ENCODE measurements at regions of chr11 and their contacts with region 1.

Region 1: DNA sequence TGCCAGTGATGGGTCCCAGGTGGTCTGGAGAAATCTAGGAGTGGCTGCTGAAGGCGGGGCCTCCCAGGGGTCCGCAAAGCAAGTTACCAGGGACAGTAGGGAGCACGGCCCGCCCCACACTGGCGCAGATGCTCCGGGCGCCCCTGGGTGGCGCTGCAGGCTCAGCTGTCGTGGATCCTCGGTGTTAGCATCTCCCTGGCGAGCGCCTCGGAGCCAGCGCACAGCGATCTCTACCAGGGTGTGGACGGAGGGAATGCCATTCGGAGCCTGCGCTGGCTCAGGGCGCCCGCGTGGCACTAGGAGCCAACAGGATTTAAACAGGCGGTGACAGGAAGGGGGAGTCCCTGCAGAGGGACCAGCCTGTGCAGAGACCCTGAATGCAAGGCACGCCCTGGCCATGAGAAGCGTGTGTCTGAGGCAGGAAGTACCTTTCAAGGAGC is 20.2 kb downstream of the FADS3 start:
- DNase-seq: peak; percentile 65 to 89
- H3K4me3 ChIP-seq: no peak overlapping the region
- H3K27ac ChIP-seq: no peak overlapping the region
- H3K4me1 ChIP-seq: 0 out of 2 replicates have a peak, but pooled peaks cover 3% of the 10 kb centered on the region
- H3K27me3 ChIP-seq: no peaks in the 10 kb centered on the region
- CTCF ChIP-seq: peak; percentile 97

Region 2: DNA sequence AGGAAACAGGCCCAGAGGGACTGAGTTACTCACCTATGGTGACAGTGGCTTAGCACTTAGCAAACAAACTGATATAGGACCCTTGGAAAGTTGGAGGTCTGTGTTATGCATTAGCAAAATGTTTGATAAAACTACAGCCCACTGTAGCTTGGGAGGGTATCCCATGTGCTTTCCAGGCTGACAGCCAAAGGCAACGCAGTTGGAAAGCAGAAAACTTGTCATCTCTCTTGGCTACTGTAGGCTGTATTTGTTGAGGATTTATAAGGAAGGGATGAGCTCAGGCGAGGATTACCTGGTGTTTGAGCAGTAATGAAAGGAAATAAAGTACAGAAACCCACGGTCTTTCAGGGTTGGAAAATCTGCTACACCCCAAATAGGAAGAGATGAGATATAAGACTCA is 417.5 kb before region 1 on chr11:
- CTCF ChIA-PET with region 1: no interaction called
- POLR2A ChIA-PET with region 1: no interaction called
- intact Hi-C with region 1: no loop called
- DNase-seq: no peak
- H3K4me3 ChIP-seq: no peak overlapping the region
- H3K27ac ChIP-seq: no peak overlapping the region
- H3K4me1 ChIP-seq: no peaks in the 10 kb centered on the region
- H3K27me3 ChIP-seq: no peaks in the 10 kb centered on the region
- CTCF ChIP-seq: no peak

Region 3: DNA sequence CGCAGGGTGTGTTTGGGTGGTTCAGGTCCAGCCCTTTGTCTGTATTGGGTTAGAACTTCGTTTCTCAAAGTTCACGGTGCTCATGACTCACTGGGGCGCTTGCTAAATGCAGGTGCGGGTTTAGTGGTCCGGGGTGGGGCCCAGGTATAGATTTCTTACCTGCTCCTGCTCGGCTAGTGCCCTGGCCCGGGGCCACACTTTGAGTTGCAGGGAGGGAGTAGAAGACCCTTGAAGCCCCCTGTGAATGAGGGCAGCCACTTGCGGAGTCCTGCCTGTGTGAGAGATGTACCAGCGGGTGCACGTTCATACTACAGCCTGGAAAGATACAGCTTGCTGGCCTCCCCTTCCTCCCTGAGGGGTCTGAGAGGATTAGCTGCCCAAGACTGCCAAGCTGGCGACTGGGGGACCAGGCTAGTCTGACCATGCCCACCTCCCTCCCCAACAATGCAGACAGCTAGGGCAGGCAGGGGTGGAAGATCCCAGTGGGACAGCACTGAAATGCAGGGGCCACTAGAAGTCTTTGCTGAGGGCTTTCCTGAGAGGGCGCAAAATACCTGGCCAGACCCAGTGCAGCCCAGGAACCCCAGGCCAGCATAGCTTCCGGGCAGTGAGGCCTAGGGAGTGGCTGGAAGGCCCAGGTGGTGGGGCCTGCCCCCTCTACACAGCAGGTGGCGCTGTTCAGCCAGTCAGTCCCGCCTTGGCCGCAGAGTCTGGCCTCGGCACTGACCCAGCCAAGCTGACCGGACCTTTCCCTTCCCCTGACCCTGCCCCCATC is 123.8 kb before region 1 on chr11:
- CTCF ChIA-PET with region 1: no interaction called
- POLR2A ChIA-PET with region 1: no interaction called
- intact Hi-C with region 1: no loop called
- DNase-seq: peak; percentile 65 to 86
- H3K4me3 ChIP-seq: no peak overlapping the region
- H3K27ac ChIP-seq: no peak overlapping the region
- H3K4me1 ChIP-seq: peaks cover 18% of the 10 kb centered on the region
- H3K27me3 ChIP-seq: no peaks in the 10 kb centered on the region
- CTCF ChIP-seq: peak; percentile 98

Region 4: DNA sequence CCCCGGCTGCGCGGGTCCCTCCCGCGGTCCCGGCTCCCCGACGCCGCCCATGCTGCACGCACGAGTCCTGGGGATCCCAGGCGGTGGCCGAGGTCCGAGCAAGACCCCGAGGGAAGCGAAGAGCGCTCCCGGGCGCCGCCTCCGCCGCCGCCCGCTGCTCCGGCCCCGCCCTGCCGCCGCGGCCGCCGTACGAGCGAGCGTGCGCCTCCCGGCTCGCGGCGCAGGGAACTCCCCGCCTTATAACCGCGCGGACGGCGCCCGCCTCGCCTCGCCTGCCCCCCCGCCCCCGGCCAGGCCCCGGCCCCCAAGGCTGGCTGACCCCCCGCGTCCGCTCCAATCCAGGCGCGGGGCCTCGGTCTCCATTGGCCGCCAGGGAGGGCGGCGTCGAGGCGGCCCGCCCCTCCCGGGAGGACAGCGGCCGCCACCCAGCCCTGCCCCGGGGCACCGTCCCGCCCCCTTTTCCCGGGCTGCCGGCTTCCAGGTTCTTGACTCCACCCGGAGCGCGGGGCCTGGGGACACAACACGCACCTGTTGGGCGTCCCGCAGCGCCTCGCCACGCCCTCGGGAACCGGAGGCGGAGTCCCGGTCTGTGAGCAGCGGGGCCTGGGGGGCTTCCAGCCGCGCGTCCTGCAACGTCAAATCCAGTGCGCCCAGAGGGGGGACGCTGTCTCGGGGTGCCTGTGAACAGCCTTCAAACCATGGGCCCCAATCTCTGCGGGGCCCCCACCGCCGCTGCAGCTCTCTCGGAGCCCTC is 20.3 kb after region 1 on chr11 and contains the start of gene FADS3:
- CTCF ChIA-PET with region 1: no interaction called
- POLR2A ChIA-PET with region 1: no interaction called
- intact Hi-C with region 1: loop called (anchors 2 kb)
- DNase-seq: peak; percentile 75 to 96
- H3K4me3 ChIP-seq: peak within 1 kb of the TSS; percentile 94
- H3K27ac ChIP-seq: no peak within 1 kb of the TSS
- H3K4me1 ChIP-seq: peaks cover 12% of the 10 kb centered on the region
- H3K27me3 ChIP-seq: no peaks in the 10 kb centered on the region
- CTCF ChIP-seq: no peak
- total RNA-seq, gene FADS3: 74.0 and 75.5 TPM in 2 replicates

Region 5: GRCh38 chr11:61947486-61948210 is 76.5 kb after region 1 on chr11:
- CTCF ChIA-PET with region 1: interaction called, 5 read pairs
- POLR2A ChIA-PET with region 1: no interaction called
- intact Hi-C with region 1: loop called (anchors 2 kb)
- DNase-seq: peak; percentile 61 to 77
- H3K4me3 ChIP-seq: no peak overlapping the region
- H3K27ac ChIP-seq: no peak overlapping the region
- H3K4me1 ChIP-seq: peaks cover 23% of the 10 kb centered on the region
- H3K27me3 ChIP-seq: no peaks in the 10 kb centered on the region
- CTCF ChIP-seq: peak; percentile 95

Region 6: GRCh38 chr11:62054484-62055121 is 183.4 kb after region 1 on chr11:
- CTCF ChIA-PET with region 1: no interaction called
- POLR2A ChIA-PET with region 1: no interaction called
- intact Hi-C with region 1: loop called (anchors 1 kb)
- DNase-seq: peak; percentile 80 to 95
- H3K4me3 ChIP-seq: no peak overlapping the region; the same call in 1 of the 2 replicates
- H3K27ac ChIP-seq: peak overlapping the region; percentile 85
- H3K4me1 ChIP-seq: peaks cover 53% of the 10 kb centered on the region
- H3K27me3 ChIP-seq: no peaks in the 10 kb centered on the region
- CTCF ChIP-seq: peak; percentile 89

Region 7: GRCh38 chr11:62081378-62082291 is 210.5 kb after region 1 on chr11:
- CTCF ChIA-PET with region 1: interaction called, 22 read pairs
- POLR2A ChIA-PET with region 1: no interaction called
- intact Hi-C with region 1: loop called (anchors 1 kb)
- DNase-seq: peak; percentile 66 to 82
- H3K4me3 ChIP-seq: no peak overlapping the region
- H3K27ac ChIP-seq: no peak overlapping the region
- H3K4me1 ChIP-seq: no peaks in the 10 kb centered on the region
- H3K27me3 ChIP-seq: no peaks in the 10 kb centered on the region
- CTCF ChIP-seq: peak; percentile 98

Region 8: GRCh38 chr11:62108017-62108750 is 237.0 kb after region 1 on chr11:
- CTCF ChIA-PET with region 1: interaction called, 10 read pairs
- POLR2A ChIA-PET with region 1: no interaction called
- intact Hi-C with region 1: loop called (anchors 1 kb)
- DNase-seq: peak; percentile 44 to 53
- H3K4me3 ChIP-seq: no peak overlapping the region
- H3K27ac ChIP-seq: no peak overlapping the region
- H3K4me1 ChIP-seq: no peaks in the 10 kb centered on the region
- H3K27me3 ChIP-seq: no peaks in the 10 kb centered on the region
- CTCF ChIP-seq: peak; percentile 93

Region 9: DNA sequence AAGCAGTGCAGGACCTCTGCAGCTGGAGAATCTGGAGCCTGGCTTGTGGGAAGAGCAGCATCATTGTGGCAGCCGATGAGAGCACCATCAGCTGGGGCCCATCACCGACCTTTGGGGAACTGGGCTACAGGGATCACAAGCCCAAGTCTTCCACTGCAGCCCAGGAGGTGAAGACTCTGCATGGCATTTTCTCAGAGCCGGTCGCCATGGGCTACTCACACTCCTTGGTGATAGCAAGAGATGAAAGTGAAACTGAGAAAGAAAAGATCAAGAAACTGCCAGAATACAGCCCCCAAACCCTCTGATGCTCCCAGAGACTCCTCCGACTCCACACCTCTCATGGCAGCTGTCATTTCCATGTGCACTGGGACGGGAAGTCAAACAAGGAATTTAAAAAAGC is 501.7 kb after region 1 on chr11:
- CTCF ChIA-PET with region 1: no interaction called
- POLR2A ChIA-PET with region 1: no interaction called
- intact Hi-C with region 1: loop called (anchors 5 kb)
- DNase-seq: no peak
- H3K4me3 ChIP-seq: no peak overlapping the region
- H3K27ac ChIP-seq: no peak overlapping the region
- H3K4me1 ChIP-seq: no peaks in the 10 kb centered on the region
- H3K27me3 ChIP-seq: no peaks in the 10 kb centered on the region
- CTCF ChIP-seq: no peak

Region 10: GRCh38 chr11:63243533-63243932 is 1372.4 kb after region 1 on chr11 and contains the start of gene SLC22A25:
- CTCF ChIA-PET with region 1: no interaction called
- POLR2A ChIA-PET with region 1: no interaction called
- intact Hi-C with region 1: no loop called
- DNase-seq: no peak
- H3K4me3 ChIP-seq: no peak within 1 kb of the TSS
- H3K27ac ChIP-seq: no peak within 1 kb of the TSS
- H3K4me1 ChIP-seq: no peaks in the 10 kb centered on the region
- H3K27me3 ChIP-seq: peaks cover 37% of the 10 kb centered on the region
- CTCF ChIP-seq: no peak
- total RNA-seq, gene SLC22A25: not detected in 2 replicates

Region 11: GRCh38 chr11:63343130-63343529 is 1472.0 kb after region 1 on chr11:
- CTCF ChIA-PET with region 1: no interaction called
- POLR2A ChIA-PET with region 1: no interaction called
- intact Hi-C with region 1: no loop called
- DNase-seq: no peak
- H3K4me3 ChIP-seq: no peak overlapping the region
- H3K27ac ChIP-seq: no peak overlapping the region
- H3K4me1 ChIP-seq: no peaks in the 10 kb centered on the region
- H3K27me3 ChIP-seq: peaks cover 13% of the 10 kb centered on the region; the same call in 1 of the 2 replicates
- CTCF ChIP-seq: no peak